ENCODE measurements at regions of chr15 and their contacts with region 1.

Region 1: GRCh38 chr15:80058851-80059785 is at the start of gene ZFAND6:
- DNase-seq: peak; percentile 95
- ATAC-seq: peak; percentile 98 to 99 (median 99)
- H3K4me3 ChIP-seq: peak within 1 kb of the TSS; percentile 69 to 91 (median 84)
- H3K27ac ChIP-seq: peak within 1 kb of the TSS; percentile 77 to 97 (median 93)
- H3K4me1 ChIP-seq: peaks cover 5 to 39% (median 27%) of the 10 kb centered on the region in 9 donors
- H3K27me3 ChIP-seq: peaks cover 0 to 15% (median 0%) of the 10 kb centered on the region in 7 donors
- CTCF ChIP-seq: peak in 1 of 9 donors; percentile 19
- total RNA-seq, gene ZFAND6: 65.9 to 89.5 (median 75.7) TPM

Region 2: DNA sequence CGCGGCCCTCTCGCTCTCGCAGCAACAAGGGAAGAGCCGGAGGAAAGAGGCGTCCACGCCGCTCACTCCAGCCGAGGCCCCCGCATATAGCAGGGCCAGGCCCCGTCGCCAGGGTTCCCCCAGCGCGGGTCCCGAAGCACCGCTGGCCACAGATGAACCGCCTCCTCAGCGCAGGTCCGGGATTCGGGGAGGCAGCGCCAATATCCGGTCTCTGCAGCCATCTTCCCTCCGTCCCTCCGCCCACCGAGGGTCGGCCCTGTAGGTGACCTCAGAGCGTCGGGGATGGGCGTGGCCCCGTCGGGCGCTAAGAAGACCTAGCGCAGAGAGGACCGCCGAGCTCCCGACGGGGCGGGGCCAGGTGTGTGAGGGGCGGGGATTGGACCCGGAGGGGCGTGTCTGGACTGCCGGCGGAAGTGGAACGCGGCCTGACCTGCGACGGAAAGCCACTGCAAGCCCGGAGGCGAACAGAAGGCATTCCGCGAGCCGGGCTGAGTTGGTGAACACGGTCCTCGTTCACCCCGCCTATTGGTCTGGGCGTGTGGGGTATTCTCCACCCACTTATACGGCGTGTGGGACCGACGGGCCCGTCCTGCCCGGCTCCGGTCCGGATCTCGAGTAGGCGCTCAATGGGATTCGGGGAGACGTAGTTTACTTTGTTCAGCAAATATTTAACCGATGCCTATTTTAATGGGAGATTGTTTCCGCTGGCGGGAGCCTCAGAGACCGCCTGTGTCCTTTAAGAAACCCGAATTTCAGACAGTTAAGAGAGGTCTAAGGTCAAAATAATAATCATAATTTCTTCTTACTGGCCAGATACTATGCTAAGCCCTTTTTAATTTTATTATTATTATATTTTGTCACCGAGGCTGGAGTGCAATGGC is 135.4 kb before region 1 on chr15:
- intact Hi-C with region 1: loop called in 2 of 10 experiments (anchors 5 kb)
- DNase-seq: peak; percentile 92 to 94
- ATAC-seq: peak; percentile 98 to 100 (median 99)
- H3K4me3 ChIP-seq: peak overlapping the region; percentile 66 to 99 (median 87)
- H3K27ac ChIP-seq: peak overlapping the region; percentile 50 to 98 (median 94)
- H3K4me1 ChIP-seq: peaks cover 0 to 16% (median 9%) of the 10 kb centered on the region in 9 donors
- H3K27me3 ChIP-seq: no peaks in the 10 kb centered on the region
- CTCF ChIP-seq: no peak

Region 3: GRCh38 chr15:80152180-80152845 is 93.2 kb after region 1 on chr15:
- intact Hi-C with region 1: loop called in 7 of 10 experiments (anchors 1 to 10 kb)
- DNase-seq: peak; percentile 96
- ATAC-seq: peak; percentile 86 to 94 (median 92)
- H3K4me3 ChIP-seq: peak overlapping the region; percentile 55 to 84 (median 72)
- H3K27ac ChIP-seq: peak overlapping the region in 9 of 10 donors; percentile 57 to 82 (median 75)
- H3K4me1 ChIP-seq: peaks cover 6 to 40% (median 20%) of the 10 kb centered on the region in 9 donors
- H3K27me3 ChIP-seq: no peaks in the 10 kb centered on the region
- CTCF ChIP-seq: no peak

Region 4: DNA sequence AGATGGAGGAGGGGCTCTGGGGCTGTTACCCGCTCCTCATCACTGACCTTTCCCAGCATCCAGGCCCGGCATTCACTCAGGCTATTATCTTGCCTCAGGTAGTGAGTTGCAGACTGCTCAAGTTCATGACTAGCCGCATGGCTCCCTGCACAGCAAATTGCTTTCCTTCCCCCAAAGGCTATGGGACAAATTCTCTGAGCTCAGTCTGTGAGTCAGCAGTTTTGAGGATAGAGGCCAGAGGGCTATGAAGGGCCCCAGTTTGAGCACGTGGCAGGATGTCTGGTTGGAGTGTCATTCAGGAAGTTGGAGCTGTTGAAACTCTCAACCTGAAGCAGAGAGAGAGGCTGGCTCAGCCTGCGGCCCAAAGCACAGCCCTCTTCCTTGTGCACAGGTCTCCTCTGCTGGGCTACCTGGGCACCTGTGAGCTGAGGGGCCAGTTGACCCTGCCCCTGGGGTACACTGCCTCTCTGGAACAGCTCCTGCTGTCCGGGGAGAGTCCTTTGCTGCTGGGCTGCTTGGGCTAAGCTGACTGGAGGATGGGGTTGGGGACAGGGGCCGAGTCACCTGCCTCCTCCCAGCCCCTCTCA is 101.5 kb after region 1 on chr15:
- intact Hi-C with region 1: loop called in 2 of 10 experiments (anchors 5 to 10 kb)
- DNase-seq: peak in 1 of 2 donors; percentile 56
- ATAC-seq: peak; percentile 67 to 90 (median 78)
- H3K4me3 ChIP-seq: no peak overlapping the region
- H3K27ac ChIP-seq: peak overlapping the region in 4 of 10 donors; percentile 15 to 85 (median 30)
- H3K4me1 ChIP-seq: peaks cover 0 to 45% (median 10%) of the 10 kb centered on the region in 9 donors
- H3K27me3 ChIP-seq: no peaks in the 10 kb centered on the region
- CTCF ChIP-seq: no peak